HCT116 (cell line): ENCODE measurements at regions of chr5 and their contacts with region 1.

Region 1: DNA sequence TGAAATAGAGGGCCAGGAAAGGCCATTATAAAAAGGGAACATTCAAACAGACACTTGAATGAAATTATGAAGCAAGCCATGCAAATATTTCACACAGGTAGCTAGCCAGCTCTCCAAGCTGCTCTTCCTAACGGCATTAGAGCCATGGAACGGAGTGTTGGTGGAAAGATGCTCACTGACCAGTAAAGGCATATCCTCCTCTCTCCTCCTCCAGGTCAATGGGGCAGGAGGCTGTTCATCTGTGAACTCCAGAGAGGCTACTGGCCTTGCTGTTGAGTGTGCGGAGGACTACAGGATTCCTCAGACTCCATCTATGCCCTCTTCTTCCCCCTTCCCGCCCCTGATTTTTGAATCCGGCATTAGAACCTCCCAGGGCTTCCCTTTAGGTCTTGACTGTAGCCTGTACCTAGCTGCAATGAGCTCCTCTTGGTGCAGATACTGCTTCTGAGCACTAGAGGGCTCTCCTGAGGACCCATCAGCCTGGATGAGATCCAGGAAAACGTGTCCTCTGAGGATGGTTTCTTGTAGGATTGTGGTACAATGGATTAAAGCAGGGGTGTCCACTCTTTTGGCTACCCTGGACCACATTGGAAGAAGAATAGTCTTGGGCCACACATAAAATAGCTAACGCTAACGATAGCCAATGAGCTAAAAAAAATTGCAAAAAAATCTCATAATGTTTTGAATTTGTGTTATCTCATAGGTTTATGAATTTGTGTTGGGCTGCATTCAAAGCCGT is 162.2 kb downstream of the SREK1 start:
- DNase-seq: peak; percentile 63
- ATAC-seq: peak; percentile 93
- H3K4me3 ChIP-seq: no peak overlapping the region
- H3K27ac ChIP-seq: no peak overlapping the region
- H3K4me1 ChIP-seq: no peaks in the 10 kb centered on the region
- H3K27me3 ChIP-seq: peaks cover 10% of the 10 kb centered on the region; the same call in 1 of the 2 replicates
- CTCF ChIP-seq: peak; percentile 53 to 95 (median 85); a peak in 5 of 6 replicates
- POLR2A ChIP-seq: no peak
- RAD21 ChIP-seq: peak; percentile 48

Region 2: GRCh38 chr5:66247176-66247960 is 58.9 kb before region 1 on chr5:
- CTCF ChIA-PET with region 1: interaction called, 3 read pairs
- POLR2A ChIA-PET with region 1: no interaction called
- RAD21 ChIA-PET with region 1: no interaction called
- intact Hi-C with region 1: loop called (anchors 2 kb)
- DNase-seq: peak; percentile 13
- ATAC-seq: peak; percentile 65
- H3K4me3 ChIP-seq: no peak overlapping the region
- H3K27ac ChIP-seq: no peak overlapping the region
- H3K4me1 ChIP-seq: peaks cover 6 to 14% of the 10 kb centered on the region in 2 experiments; a peak in 3 of 4 replicates
- H3K27me3 ChIP-seq: no peaks in the 10 kb centered on the region
- CTCF ChIP-seq: no peak
- POLR2A ChIP-seq: no peak
- RAD21 ChIP-seq: no peak

Region 3: DNA sequence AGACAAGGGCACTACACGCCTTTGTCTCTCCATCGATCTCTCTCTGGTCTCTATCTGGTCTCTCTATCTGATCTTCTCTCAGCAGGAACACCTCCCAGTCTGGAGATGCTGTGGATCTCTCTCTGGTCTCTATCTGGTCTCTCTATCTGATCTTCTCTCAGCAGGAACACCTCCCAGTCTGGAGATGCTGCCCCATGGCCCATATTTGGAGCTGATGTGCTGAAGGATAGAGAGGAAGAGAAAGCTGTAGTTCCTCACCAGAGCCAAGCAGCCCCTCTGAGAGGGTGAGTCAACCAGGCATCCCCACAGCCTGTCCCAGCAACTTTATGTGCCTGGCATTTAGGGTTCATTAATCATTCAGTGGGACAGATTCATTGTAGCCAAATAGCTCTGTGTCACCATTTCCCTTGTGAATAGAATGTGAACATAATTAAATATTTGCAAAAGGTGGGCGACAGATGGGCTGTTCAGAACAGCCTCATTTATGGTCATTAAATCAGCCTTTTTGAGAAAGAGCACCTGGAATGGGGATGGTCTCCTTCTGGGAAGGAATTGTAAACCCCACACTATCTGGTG is 100.6 kb after region 1 on chr5:
- CTCF ChIA-PET with region 1: no interaction called
- POLR2A ChIA-PET with region 1: no interaction called
- RAD21 ChIA-PET with region 1: no interaction called
- intact Hi-C with region 1: no loop called
- DNase-seq: no peak
- ATAC-seq: no peak
- H3K4me3 ChIP-seq: no peak overlapping the region
- H3K27ac ChIP-seq: no peak overlapping the region
- H3K4me1 ChIP-seq: no peaks in the 10 kb centered on the region
- H3K27me3 ChIP-seq: 0 out of 2 replicates have a peak, but pooled peaks cover 4% of the 10 kb centered on the region
- CTCF ChIP-seq: no peak
- POLR2A ChIP-seq: no peak
- RAD21 ChIP-seq: no peak

Region 4: DNA sequence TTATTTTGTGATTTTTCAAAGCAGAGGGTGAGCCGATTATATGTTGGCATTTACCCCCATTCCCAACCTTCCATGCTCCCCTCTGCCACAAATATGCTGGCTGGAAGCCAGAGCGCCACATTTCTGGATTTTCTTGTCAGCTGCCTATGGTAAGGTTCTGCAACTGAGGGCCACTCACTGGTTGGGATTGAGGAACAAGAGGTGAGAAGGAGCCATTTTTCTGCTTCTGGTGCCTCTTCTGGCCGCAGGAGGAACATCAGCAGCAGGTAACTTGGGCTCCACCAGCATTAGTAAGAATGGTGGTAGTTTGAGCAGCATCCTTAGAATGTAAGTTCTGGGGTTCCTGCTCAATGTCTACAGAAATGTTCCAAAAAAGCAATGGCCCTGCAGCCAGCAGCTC is 130.4 kb after region 1 on chr5:
- CTCF ChIA-PET with region 1: interaction called, 3 read pairs
- POLR2A ChIA-PET with region 1: no interaction called
- RAD21 ChIA-PET with region 1: no interaction called
- intact Hi-C with region 1: loop called (anchors 2 kb)
- DNase-seq: peak; percentile 16
- ATAC-seq: peak; percentile 96
- H3K4me3 ChIP-seq: no peak overlapping the region
- H3K27ac ChIP-seq: no peak overlapping the region
- H3K4me1 ChIP-seq: no peaks in the 10 kb centered on the region
- H3K27me3 ChIP-seq: no peaks in the 10 kb centered on the region
- CTCF ChIP-seq: peak in 2 of 3 experiments; percentile 54 to 66; a peak in 4 of 6 replicates
- POLR2A ChIP-seq: no peak
- RAD21 ChIP-seq: peak; percentile 43

Region 5: GRCh38 chr5:66742083-66742895 is 436.0 kb after region 1 on chr5:
- CTCF ChIA-PET with region 1: interaction called, 12 read pairs
- POLR2A ChIA-PET with region 1: no interaction called
- RAD21 ChIA-PET with region 1: no interaction called
- intact Hi-C with region 1: loop called (anchors 5 kb)
- DNase-seq: peak; percentile 21
- ATAC-seq: peak; percentile 84
- H3K4me3 ChIP-seq: no peak overlapping the region
- H3K27ac ChIP-seq: no peak overlapping the region
- H3K4me1 ChIP-seq: no peaks in the 10 kb centered on the region
- H3K27me3 ChIP-seq: peaks cover 47% of the 10 kb centered on the region
- CTCF ChIP-seq: peak; percentile 25 to 57 (median 55); a peak in 5 of 6 replicates
- POLR2A ChIP-seq: no peak
- RAD21 ChIP-seq: 0 out of 2 replicates have a peak, but pooled peaks have one; percentile 17

Region 6: DNA sequence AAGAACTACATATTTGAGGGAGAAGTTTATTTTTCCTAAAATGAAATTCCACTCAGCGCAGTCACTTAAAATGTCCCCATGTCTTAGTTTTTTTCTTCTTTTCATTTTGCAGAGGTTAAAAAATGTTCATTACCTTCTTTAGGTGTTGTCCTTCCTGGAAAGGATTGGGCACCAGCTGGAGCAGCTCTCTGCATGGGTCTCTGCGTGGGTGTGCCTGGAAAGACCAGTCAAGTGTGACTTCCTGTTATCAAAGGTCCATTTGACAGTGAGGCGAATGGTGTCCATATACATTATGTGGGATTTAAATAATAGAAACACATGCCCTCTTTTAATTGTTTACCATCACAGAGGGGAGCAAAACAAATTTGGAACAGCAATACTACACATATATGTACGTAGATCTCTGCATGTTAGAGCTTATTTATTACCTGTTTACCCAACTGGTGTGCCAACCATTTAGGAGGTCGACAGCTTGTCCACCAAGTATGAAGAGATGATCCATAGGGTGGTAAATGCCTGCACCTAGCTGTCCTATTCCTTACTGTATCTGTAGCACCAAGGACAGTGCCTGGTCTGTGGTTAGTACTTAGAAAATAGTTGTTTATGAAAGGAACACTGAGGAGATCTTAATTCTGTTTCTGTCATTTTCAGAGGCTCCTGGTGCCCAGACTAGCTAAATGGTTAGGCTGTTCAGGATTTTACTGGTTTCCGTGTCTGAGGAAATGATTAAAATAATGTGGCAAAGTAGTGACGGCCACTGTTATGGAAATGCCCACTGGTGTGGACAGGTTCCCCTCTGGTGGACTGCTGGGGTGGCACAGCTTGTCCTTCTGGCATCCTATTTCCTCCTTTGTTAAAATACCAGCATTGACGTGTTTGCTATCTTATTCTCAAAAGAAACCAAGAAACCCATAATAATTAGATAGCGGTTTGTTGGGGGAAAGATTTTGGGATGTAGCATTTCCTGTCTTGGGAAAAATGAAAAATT is 490.3 kb after region 1 on chr5:
- CTCF ChIA-PET with region 1: interaction called, 14 read pairs
- POLR2A ChIA-PET with region 1: no interaction called
- RAD21 ChIA-PET with region 1: no interaction called
- intact Hi-C with region 1: no loop called
- DNase-seq: no peak
- ATAC-seq: no peak
- H3K4me3 ChIP-seq: no peak overlapping the region
- H3K27ac ChIP-seq: no peak overlapping the region
- H3K4me1 ChIP-seq: no peaks in the 10 kb centered on the region
- H3K27me3 ChIP-seq: peaks cover 35% of the 10 kb centered on the region; the same call in 1 of the 2 replicates
- CTCF ChIP-seq: peak in 2 of 3 experiments; percentile 21 to 30; a peak in 1 of 6 replicates
- POLR2A ChIP-seq: no peak
- RAD21 ChIP-seq: peak; percentile 36

Region 7: GRCh38 chr5:66864331-66864840 is 558.1 kb after region 1 on chr5:
- CTCF ChIA-PET with region 1: no interaction called
- POLR2A ChIA-PET with region 1: no interaction called
- RAD21 ChIA-PET with region 1: no interaction called
- intact Hi-C with region 1: loop called (anchors 5 kb)
- DNase-seq: no peak
- ATAC-seq: peak; percentile 70
- H3K4me3 ChIP-seq: no peak overlapping the region
- H3K27ac ChIP-seq: no peak overlapping the region
- H3K4me1 ChIP-seq: no peaks in the 10 kb centered on the region
- H3K27me3 ChIP-seq: peaks cover 46% of the 10 kb centered on the region
- CTCF ChIP-seq: peak; percentile 32 to 62 (median 42); a peak in 5 of 6 replicates
- POLR2A ChIP-seq: no peak
- RAD21 ChIP-seq: peak; percentile 53